Mammary epithelial cell (primary cell): ENCODE measurements at regions of chr3 and their contacts with region 1.

Region 1: DNA sequence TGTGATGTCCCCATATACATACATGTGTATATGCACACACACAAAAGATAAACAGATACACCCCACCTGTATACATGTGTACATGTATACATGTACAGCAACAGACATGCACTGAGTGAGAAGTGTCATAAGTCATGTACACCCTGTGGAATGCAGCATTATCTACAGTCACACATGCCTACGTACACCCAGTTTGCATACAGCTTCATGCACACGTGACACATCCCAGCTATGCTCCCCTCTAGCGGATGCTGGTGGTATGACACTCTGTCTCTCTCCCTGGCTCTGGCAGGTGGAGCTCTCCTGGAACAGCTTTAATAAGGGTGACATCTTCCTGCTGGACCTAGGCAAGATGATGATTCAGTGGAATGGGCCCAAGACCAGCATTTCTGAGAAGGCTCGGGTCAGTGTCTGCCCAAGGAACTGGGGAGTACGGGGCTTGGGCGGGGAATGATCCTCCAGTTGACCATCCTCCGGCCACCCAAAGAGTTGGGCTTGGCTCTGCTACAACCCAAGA is 6.3 kb downstream of the VILL start:
- DNase-seq: peak; percentile 75
- H3K4me3 ChIP-seq: no peak overlapping the region
- H3K27ac ChIP-seq: no peak overlapping the region
- H3K4me1 ChIP-seq: peaks cover 40% of the 10 kb centered on the region
- H3K27me3 ChIP-seq: no peaks in the 10 kb centered on the region
- CTCF ChIP-seq: peak; percentile 91 to 98

Region 2: GRCh38 chr3:37974121-37975083 is 22.4 kb before region 1 on chr3:
- CTCF ChIA-PET with region 1: no interaction called
- dilution Hi-C with region 1: no loop called
- in situ Hi-C with region 1: no loop called
- intact Hi-C with region 1: loop called (anchors 1 kb)
- DNase-seq: peak; percentile 30
- H3K4me3 ChIP-seq: no peak overlapping the region
- H3K27ac ChIP-seq: no peak overlapping the region
- H3K4me1 ChIP-seq: no peaks in the 10 kb centered on the region
- H3K27me3 ChIP-seq: no peaks in the 10 kb centered on the region
- CTCF ChIP-seq: peak; percentile 70 to 76

Region 3: DNA sequence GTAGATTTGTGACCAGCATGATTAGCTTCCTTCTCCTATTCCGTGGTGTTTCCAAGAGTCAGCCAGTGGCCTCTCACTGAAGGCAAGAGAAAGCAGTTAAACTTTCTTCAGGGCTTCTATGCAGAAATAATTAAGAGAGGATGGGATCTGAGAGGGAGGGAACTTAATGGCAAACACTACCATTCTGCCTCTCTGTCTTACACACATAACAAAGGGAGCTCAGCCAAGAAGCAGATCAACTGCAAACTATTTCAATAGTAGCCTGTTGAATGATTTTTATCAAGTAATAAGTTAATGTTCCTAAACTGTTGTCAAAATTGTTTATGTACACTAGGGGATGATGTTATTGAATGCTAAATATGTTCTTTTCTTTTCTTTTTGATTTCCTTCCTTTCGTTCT is 180.3 kb after region 1 on chr3:
- CTCF ChIA-PET with region 1: no interaction called
- dilution Hi-C with region 1: no loop called
- in situ Hi-C with region 1: no loop called
- intact Hi-C with region 1: no loop called
- DNase-seq: no peak
- H3K4me3 ChIP-seq: no peak overlapping the region
- H3K27ac ChIP-seq: no peak overlapping the region
- H3K4me1 ChIP-seq: peaks cover 20% of the 10 kb centered on the region
- H3K27me3 ChIP-seq: no peaks in the 10 kb centered on the region
- CTCF ChIP-seq: no peak